ENCODE measurements at regions of chr13 and their contacts with region 1.

Region 1: DNA sequence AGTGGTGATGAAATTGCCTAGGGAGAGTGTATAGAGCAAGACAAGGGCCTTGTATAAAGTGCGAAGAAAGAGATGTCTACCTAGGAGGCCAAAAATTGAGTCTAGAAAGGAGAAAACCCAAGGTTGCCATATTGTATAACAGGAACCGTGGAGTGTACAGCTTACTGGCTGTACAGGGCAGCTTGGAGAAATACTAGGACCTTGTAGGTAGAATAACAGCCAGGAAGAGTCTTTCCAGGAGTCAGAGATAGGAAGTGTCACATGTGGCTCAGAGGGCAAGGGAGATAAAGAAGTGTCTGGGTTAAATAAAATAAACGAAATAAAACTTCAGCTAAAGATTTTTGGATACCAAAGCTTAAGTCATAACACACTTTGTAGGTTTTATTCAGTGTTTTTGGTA is 12.4 kb downstream of the CDK8 start:
- DNase-seq: no peak
- H3K4me3 Mint-ChIP-seq: no peak overlapping the region
- H3K27ac Mint-ChIP-seq: no peak overlapping the region
- H3K4me1 Mint-ChIP-seq: peaks cover 26% of the 10 kb centered on the region
- H3K27me3 Mint-ChIP-seq: no peaks in the 10 kb centered on the region
- CTCF ChIP-seq: no peak

Region 2: GRCh38 chr13:26236296-26236695 is 30.0 kb before region 1 on chr13:
- CTCF ChIA-PET with region 1: no interaction called
- POLR2A ChIA-PET with region 1: no interaction called
- intact Hi-C with region 1: no loop called
- DNase-seq: no peak
- H3K4me3 Mint-ChIP-seq: no peak overlapping the region
- H3K27ac Mint-ChIP-seq: no peak overlapping the region
- H3K4me1 Mint-ChIP-seq: no peaks in the 10 kb centered on the region
- H3K27me3 Mint-ChIP-seq: peaks cover 24% of the 10 kb centered on the region
- CTCF ChIP-seq: no peak

Region 3: GRCh38 chr13:26253787-26254582 is 12.3 kb before region 1 on chr13 and contains the start of gene CDK8:
- CTCF ChIA-PET with region 1: interaction called, 4 read pairs
- POLR2A ChIA-PET with region 1: interaction called, 12 read pairs
- intact Hi-C with region 1: no loop called
- DNase-seq: peak; percentile 90
- H3K4me3 Mint-ChIP-seq: peak within 1 kb of the TSS; percentile 80
- H3K27ac Mint-ChIP-seq: peak within 1 kb of the TSS; percentile 67
- H3K4me1 Mint-ChIP-seq: peaks cover 18% of the 10 kb centered on the region
- H3K27me3 Mint-ChIP-seq: no peaks in the 10 kb centered on the region
- CTCF ChIP-seq: no peak
- total RNA-seq, gene CDK8: 20.6 and 22.2 TPM in 2 replicates